HCT116 (cell line): ENCODE measurements at regions of chr9 and their contacts with region 1.

Region 1: DNA sequence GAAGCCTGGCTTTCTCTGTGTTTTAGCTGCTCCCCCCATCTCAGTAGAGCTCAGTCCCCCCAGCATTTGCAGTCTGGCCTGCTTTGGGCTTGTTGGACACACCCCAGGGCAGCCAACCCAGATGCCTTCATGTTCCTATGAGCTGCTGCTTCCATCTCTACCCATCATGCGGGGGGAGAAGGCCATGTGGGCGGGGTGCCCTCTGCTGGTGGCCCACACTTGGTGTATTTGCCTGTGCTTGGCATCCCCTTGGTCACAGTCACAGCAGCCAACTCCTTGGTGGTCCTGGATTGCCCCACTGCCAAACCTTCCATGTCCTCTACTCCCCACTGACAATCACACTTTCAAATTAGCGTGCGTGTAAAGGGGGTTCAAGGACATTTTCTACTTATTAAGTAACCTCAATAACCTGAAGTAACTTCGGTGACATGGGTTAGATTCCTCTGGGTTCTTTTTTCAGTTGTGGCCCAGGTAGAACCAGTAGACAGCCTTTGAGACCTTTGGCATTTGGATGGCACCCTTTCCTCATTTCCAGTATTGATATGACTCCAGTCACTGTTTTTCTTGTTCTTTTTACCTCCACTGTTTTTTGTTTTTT is 42.8 kb downstream of the SNX30 start:
- DNase-seq: peak; percentile 51
- ATAC-seq: peak; percentile 99
- H3K4me3 ChIP-seq: no peak overlapping the region
- H3K27ac ChIP-seq: no peak overlapping the region
- H3K4me1 ChIP-seq: peaks cover 0 to 4% of the 10 kb centered on the region in 2 experiments; a peak in 2 of 4 replicates
- H3K27me3 ChIP-seq: no peaks in the 10 kb centered on the region
- CTCF ChIP-seq: peak; percentile 64 to 94 (median 86); a peak in 5 of 6 replicates
- POLR2A ChIP-seq: no peak
- RAD21 ChIP-seq: peak; percentile 91

Region 2: DNA sequence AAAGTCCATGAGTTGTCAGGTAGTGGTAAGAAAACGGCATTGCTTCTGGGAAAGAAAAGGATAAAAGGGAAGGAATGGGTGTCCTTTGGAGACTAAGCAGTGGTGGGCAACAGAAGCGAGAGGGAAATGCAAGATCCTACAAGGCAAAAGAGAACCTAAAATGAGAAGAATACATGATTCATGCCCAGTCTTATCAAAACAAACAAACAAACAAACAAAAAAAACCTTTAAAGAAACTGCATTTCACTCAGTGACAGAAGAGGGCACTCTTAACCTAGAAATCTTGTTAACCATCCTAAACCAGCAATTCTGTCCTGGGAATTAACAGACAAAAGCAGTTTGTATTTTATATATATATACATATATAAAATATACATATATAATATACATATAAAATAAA is 706.7 kb before region 1 on chr9:
- CTCF ChIA-PET with region 1: no interaction called
- POLR2A ChIA-PET with region 1: no interaction called
- RAD21 ChIA-PET with region 1: no interaction called
- intact Hi-C with region 1: loop called (anchors 5 kb)
- DNase-seq: no peak
- ATAC-seq: peak; percentile 38; the same call in 1 of the 2 replicates
- H3K4me3 ChIP-seq: no peak overlapping the region
- H3K27ac ChIP-seq: no peak overlapping the region
- H3K4me1 ChIP-seq: no peaks in the 10 kb centered on the region
- H3K27me3 ChIP-seq: no peaks in the 10 kb centered on the region
- CTCF ChIP-seq: peak; percentile 47 to 61 (median 53); a peak in 5 of 6 replicates
- POLR2A ChIP-seq: no peak
- RAD21 ChIP-seq: peak; percentile 70

Region 3: GRCh38 chr9:112443200-112443599 is 350.1 kb before region 1 on chr9:
- CTCF ChIA-PET with region 1: interaction called, 9 read pairs
- POLR2A ChIA-PET with region 1: no interaction called
- RAD21 ChIA-PET with region 1: no interaction called
- intact Hi-C with region 1: loop called (anchors 5 kb)
- DNase-seq: no peak
- ATAC-seq: 0 out of 2 replicates have a peak, but pooled peaks have one; percentile 55
- H3K4me3 ChIP-seq: no peak overlapping the region
- H3K27ac ChIP-seq: no peak overlapping the region
- H3K4me1 ChIP-seq: no peaks in the 10 kb centered on the region
- H3K27me3 ChIP-seq: no peaks in the 10 kb centered on the region
- CTCF ChIP-seq: peak; percentile 43 to 67 (median 55); a peak in 5 of 6 replicates
- POLR2A ChIP-seq: no peak
- RAD21 ChIP-seq: peak; percentile 48

Region 4: GRCh38 chr9:112717661-112718341 is 75.5 kb before region 1 on chr9 and contains the start of gene INIP:
- CTCF ChIA-PET with region 1: interaction called, 7 read pairs
- POLR2A ChIA-PET with region 1: no interaction called
- RAD21 ChIA-PET with region 1: interaction called, 3 to 4 read pairs
- intact Hi-C with region 1: loop called (anchors 10 kb)
- DNase-seq: peak; percentile 96
- ATAC-seq: peak; percentile 90
- H3K4me3 ChIP-seq: peak within 1 kb of the TSS; percentile 70 to 75
- H3K27ac ChIP-seq: peak within 1 kb of the TSS; percentile 55
- H3K4me1 ChIP-seq: peaks cover 2 to 10% of the 10 kb centered on the region in 2 experiments; a peak in 2 of 4 replicates
- H3K27me3 ChIP-seq: no peaks in the 10 kb centered on the region
- CTCF ChIP-seq: no peak
- POLR2A ChIP-seq: peak; percentile 33
- RAD21 ChIP-seq: no peak; the same call in 1 of the 2 replicates
- total RNA-seq, gene INIP: 28.9 TPM

Region 5: GRCh38 chr9:113056191-113057106 is 263.1 kb after region 1 on chr9 and contains the start of gene ZFP37:
- CTCF ChIA-PET with region 1: no interaction called
- POLR2A ChIA-PET with region 1: no interaction called
- RAD21 ChIA-PET with region 1: no interaction called
- intact Hi-C with region 1: no loop called
- DNase-seq: peak; percentile 72
- ATAC-seq: peak; percentile 94
- H3K4me3 ChIP-seq: peak within 1 kb of the TSS; percentile 53 to 83
- H3K27ac ChIP-seq: peak within 1 kb of the TSS; percentile 9; the same call in 1 of the 2 replicates
- H3K4me1 ChIP-seq: peaks cover 0 to 8% of the 10 kb centered on the region in 2 experiments; a peak in 2 of 4 replicates
- H3K27me3 ChIP-seq: no peaks in the 10 kb centered on the region
- CTCF ChIP-seq: no peak
- POLR2A ChIP-seq: no peak
- RAD21 ChIP-seq: no peak
- total RNA-seq, gene ZFP37: 1.8 TPM